ENCODE measurements at regions of chr12 and their contacts with region 1.

Region 1: DNA sequence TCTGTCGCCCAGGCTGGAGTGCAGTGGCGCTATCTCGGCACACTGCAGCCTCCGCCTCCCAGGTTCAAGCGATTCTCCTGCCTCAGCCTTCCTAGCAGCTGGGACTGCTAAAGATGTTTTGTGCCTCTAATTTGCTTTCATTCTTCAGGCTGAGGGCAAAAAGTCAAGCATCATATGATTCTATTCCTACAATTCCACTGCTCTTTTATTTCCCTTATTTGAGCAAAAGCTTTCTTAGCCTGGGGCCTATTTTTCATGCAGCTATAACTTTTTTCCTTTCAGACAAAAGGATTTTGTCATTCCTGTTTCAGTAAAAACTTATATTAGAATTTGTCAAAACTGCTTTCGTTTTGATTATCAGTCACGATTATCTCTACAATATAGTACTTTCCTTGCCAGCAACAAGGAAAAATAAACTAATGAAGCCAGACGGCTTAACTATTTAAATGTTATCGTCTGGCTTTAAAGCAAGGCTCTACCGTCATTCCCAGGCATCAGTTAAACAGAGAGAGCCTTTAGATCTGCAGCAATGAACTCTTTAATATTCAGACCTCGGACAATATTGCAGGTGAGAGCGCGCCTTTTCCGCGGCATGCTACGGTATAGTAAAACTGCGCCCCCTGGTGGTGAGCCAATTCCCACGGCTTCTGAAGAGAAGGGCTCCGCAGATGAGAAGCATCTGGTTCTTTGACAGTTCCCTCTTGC is 1.4 kb upstream of the SLC2A13 start:
- DNase-seq: peak; percentile 62 to 82
- ATAC-seq: peak; percentile 25 to 54; a peak in 3 of 6 replicates
- H3K4me3 ChIP-seq: peak overlapping the region; percentile 31; the same call in 2 of the 3 replicates
- H3K27ac ChIP-seq: no peak overlapping the region
- H3K4me1 ChIP-seq: peaks cover 3% of the 10 kb centered on the region; the same call in 1 of the 3 replicates
- CTCF ChIP-seq: peak; percentile 91
- EP300 ChIP-seq: no peak
- POLR2A ChIP-seq: no peak
- RAD21 ChIP-seq: peak; percentile 85 to 87

Region 2: DNA sequence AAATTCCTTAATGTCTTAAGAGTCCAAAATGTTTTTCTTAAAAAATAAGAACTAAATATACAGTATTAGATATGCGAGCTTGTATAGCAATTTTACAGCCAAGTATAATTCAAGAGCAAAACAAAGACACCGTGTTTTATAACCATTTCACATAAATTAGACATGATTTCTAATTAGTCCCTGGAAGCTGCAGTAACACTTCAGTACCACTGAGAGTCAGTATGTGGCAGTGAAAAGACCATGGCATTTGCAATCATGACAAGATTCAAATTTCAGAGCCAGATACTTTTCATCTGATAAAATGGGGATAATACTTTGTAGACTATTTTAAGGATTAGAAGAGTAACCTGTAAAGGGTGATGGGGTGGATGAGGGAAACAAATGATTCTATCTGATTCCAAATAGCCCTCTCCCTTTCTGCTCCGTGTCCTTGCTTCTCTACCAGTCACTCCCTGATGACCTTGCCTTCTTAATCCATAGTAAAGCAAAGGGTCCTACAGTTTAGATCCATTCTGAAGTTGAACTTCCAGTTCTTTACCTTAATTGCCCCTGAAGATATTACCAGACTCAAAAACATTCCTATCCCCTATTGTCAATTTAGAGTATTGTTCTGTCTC is 342.2 kb before region 1 on chr12:
- CTCF ChIA-PET with region 1: interaction called, 28 read pairs
- POLR2A ChIA-PET with region 1: no interaction called
- DNase-seq: peak; percentile 28 to 55
- ATAC-seq: peak; percentile 47 to 79; a peak in 3 of 6 replicates
- H3K4me3 ChIP-seq: no peak overlapping the region
- H3K27ac ChIP-seq: no peak overlapping the region
- H3K4me1 ChIP-seq: no peaks in the 10 kb centered on the region
- CTCF ChIP-seq: peak; percentile 74
- EP300 ChIP-seq: no peak
- POLR2A ChIP-seq: no peak
- RAD21 ChIP-seq: peak; percentile 87 to 89

Region 3: GRCh38 chr12:39912211-39912978 is 194.9 kb before region 1 on chr12:
- CTCF ChIA-PET with region 1: no interaction called
- POLR2A ChIA-PET with region 1: no interaction called
- DNase-seq: peak in 1 of 2 experiments; percentile 19
- ATAC-seq: no peak
- H3K4me3 ChIP-seq: no peak overlapping the region
- H3K27ac ChIP-seq: no peak overlapping the region
- H3K4me1 ChIP-seq: no peaks in the 10 kb centered on the region
- CTCF ChIP-seq: no peak
- EP300 ChIP-seq: no peak
- POLR2A ChIP-seq: no peak
- RAD21 ChIP-seq: no peak

Region 4: DNA sequence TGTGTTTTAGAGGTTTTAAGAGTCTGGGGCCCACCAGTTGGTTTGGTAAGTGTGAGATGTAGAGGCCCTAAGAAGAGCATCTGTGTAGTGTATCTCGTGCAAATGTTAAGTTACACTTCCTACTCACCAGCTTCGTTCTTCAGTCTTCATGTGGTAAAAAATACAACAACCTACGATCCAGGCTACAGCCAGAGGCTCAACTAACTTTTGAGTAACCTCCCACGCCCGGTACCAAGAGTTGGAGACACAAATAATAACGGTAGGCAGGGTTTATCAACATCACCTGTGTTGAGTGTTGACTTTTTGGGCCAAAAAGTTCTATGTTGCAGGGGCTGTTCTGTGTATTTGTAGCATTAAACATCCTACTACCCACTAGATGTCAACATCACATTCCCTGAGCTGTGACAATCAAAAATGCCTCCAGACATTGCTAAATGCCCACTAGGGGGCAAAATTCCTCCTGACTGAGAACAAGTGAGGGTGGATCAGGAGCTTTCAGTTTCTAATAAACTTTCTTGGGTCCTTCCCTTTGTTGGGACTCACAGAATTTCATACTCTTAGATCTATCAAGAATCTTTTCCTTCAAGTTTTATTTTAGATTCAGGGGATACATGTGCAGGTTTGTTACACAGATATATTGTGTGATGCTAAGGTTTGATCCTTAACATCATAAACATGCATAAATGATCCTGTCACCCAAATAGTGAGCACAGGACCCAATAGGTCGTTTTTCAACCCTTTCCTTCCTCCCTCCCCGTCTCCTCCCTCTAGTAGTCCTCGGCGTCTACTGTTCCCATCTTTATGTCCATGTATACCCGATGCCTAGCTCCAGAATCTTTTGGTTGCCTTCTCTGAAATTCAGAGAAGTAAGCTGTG is 96.1 kb before region 1 on chr12:
- CTCF ChIA-PET with region 1: interaction called, 66 read pairs
- POLR2A ChIA-PET with region 1: no interaction called
- DNase-seq: peak; percentile 55 to 80
- ATAC-seq: peak; percentile 95 to 98
- H3K4me3 ChIP-seq: no peak overlapping the region
- H3K27ac ChIP-seq: peak overlapping the region in 1 of 2 experiments; percentile 42; a peak in 3 of 6 replicates
- H3K4me1 ChIP-seq: peaks cover 18% of the 10 kb centered on the region
- CTCF ChIP-seq: peak; percentile 96
- EP300 ChIP-seq: no peak
- POLR2A ChIP-seq: no peak
- RAD21 ChIP-seq: peak; percentile 82

Region 5: DNA sequence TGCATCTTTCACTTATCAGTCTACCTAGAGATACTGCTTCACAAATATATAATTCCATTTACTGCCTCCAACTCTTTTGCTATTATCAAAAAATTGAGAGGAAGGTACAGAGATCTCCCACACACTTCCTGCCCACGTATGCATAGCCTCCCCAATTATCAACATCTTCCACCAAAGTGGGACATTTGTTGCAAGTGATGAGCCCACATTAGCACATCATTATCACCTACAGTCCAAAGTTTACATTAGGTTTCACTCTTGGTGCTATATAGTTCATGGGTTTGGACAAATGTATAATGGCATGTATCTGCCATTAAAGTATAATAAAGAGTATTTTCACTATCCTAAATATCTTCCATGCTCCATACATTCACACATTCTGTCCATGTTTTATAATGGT is 67.7 kb before region 1 on chr12:
- CTCF ChIA-PET with region 1: no interaction called
- POLR2A ChIA-PET with region 1: no interaction called
- DNase-seq: no peak
- ATAC-seq: no peak
- H3K4me3 ChIP-seq: no peak overlapping the region
- H3K27ac ChIP-seq: no peak overlapping the region
- H3K4me1 ChIP-seq: peaks cover 11% of the 10 kb centered on the region
- CTCF ChIP-seq: no peak
- EP300 ChIP-seq: no peak
- POLR2A ChIP-seq: no peak
- RAD21 ChIP-seq: no peak

Region 6: DNA sequence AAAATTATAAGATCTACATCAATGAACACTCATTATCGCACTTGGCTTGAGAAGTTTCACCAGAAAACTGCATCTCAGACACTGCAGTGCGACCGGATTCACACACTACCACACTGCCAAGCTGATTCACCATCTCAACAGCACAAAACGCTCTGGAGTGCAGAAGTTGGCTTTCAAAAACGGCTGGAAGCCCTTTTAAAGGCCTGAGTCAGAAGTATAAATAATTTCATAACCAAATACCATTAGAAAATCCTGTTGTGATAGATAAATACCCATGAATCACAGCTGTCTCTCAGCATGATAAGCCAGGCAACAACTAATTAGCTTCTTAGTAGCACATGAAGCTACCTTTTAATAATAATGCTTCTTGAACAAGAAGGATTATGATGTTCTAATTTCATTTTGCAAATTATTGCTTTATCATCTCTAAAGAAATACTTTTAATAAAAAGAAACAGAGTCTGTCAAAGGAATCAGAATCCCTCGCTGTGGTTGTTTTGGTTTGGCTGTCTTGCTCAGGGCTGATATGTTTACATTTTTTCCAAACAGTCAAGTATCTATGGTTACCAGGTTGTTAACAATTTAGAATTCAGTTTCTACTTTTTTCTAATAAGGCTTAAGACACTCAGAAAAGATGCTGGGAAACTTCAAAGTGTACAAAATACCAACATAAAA is 52.6 kb before region 1 on chr12:
- CTCF ChIA-PET with region 1: interaction called, 13 read pairs
- POLR2A ChIA-PET with region 1: no interaction called
- DNase-seq: peak; percentile 21 to 58
- ATAC-seq: peak; percentile 79 to 95
- H3K4me3 ChIP-seq: no peak overlapping the region
- H3K27ac ChIP-seq: no peak overlapping the region; a peak in 1 of 6 replicates
- H3K4me1 ChIP-seq: peaks cover 24% of the 10 kb centered on the region; the same call in 2 of the 3 replicates
- CTCF ChIP-seq: no peak
- EP300 ChIP-seq: no peak
- POLR2A ChIP-seq: no peak
- RAD21 ChIP-seq: no peak

Region 7: DNA sequence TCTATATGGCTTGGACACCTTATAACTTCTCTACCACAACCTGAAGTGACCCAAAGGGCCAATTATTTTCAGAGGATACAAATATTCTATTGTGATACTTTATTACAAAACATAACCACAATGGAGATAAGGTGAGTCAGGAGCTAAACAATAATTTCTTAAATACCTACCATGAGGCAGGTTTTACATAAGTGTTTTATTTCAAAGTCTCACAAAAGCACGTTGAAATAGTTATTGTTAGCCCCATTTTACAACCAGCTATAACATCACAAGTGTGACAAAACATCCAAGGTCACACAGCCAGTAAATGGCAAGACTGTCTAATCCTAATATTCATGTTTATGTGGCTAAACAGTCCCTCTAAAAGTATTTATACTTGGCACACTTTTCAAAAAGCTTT is 41.6 kb before region 1 on chr12:
- CTCF ChIA-PET with region 1: interaction called, 10 read pairs
- POLR2A ChIA-PET with region 1: no interaction called
- DNase-seq: no peak
- ATAC-seq: no peak; a peak in 1 of 6 replicates
- H3K4me3 ChIP-seq: no peak overlapping the region
- H3K27ac ChIP-seq: no peak overlapping the region
- H3K4me1 ChIP-seq: no peaks in the 10 kb centered on the region
- CTCF ChIP-seq: no peak
- EP300 ChIP-seq: no peak
- POLR2A ChIP-seq: no peak
- RAD21 ChIP-seq: no peak

Region 8: GRCh38 chr12:40093512-40093911 is 13.7 kb before region 1 on chr12:
- CTCF ChIA-PET with region 1: interaction called, 15 read pairs
- POLR2A ChIA-PET with region 1: no interaction called
- DNase-seq: no peak
- ATAC-seq: no peak
- H3K4me3 ChIP-seq: no peak overlapping the region
- H3K27ac ChIP-seq: no peak overlapping the region
- H3K4me1 ChIP-seq: no peaks in the 10 kb centered on the region
- CTCF ChIP-seq: no peak
- EP300 ChIP-seq: no peak
- POLR2A ChIP-seq: no peak
- RAD21 ChIP-seq: no peak

Region 9: DNA sequence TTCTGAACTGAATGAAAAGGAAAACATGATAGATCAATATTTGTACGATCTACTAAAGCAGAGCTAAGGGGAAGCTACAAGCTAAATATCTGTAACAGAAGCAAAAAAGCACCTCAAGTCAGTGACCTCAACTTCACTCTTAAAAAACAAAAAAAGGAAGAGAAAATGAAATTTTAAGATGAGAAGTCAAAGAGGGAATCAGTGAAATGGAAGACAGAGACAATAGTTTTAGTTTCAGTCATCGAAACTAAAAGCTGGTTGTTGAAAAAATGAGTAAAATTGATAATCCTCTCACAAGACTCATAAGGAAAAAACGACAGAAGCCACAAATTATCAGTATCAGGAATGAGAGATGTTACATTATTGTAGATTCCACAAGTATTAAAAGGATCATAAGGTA is 10.6 kb after region 1 on chr12:
- CTCF ChIA-PET with region 1: interaction called, 33 read pairs
- POLR2A ChIA-PET with region 1: no interaction called
- DNase-seq: no peak
- ATAC-seq: no peak
- H3K4me3 ChIP-seq: no peak overlapping the region
- H3K27ac ChIP-seq: no peak overlapping the region
- H3K4me1 ChIP-seq: no peaks in the 10 kb centered on the region
- CTCF ChIP-seq: no peak
- EP300 ChIP-seq: no peak
- POLR2A ChIP-seq: no peak
- RAD21 ChIP-seq: no peak

Region 10: GRCh38 chr12:40141996-40142395 is 34.7 kb after region 1 on chr12:
- CTCF ChIA-PET with region 1: no interaction called
- POLR2A ChIA-PET with region 1: no interaction called
- DNase-seq: no peak
- ATAC-seq: no peak
- H3K4me3 ChIP-seq: no peak overlapping the region
- H3K27ac ChIP-seq: no peak overlapping the region
- H3K4me1 ChIP-seq: peaks cover 9% of the 10 kb centered on the region; the same call in 1 of the 3 replicates
- CTCF ChIP-seq: no peak
- EP300 ChIP-seq: no peak
- POLR2A ChIP-seq: no peak
- RAD21 ChIP-seq: no peak

Region 11: DNA sequence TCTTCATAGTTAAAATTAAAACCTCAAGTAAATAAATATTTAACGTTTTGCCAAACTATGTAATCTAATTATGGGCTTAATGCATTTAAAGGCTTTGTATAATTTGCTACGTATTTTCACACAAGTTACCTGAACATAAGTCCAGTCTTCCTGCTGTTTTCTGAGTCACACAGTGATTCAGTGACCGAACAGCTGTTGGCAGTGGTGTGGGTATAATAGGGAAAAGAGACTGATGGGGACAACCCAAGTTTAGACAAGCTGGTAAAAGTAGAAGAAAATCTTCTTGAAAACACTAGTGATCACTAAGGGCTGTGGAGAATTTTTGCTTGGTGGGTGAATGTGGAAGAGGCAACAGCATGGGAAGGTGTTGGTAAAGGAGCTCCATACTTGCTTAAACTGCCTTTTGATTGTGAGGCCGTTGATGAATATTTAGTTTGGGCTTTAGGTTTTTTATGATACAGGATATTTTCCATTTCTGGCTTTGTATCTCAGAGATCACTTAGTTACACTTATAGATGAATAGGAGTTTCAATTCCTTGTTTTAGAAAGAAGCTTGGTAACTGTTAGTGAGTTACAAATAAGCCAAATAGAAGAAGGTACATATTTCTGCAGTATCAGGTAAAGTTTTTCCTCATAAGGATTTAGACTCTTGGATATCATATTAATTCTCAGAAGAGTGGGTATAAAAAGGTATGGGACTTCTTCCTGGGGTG is 141.5 kb after region 1 on chr12:
- CTCF ChIA-PET with region 1: no interaction called
- POLR2A ChIA-PET with region 1: no interaction called
- DNase-seq: peak in 1 of 2 experiments; percentile 18
- ATAC-seq: peak in 1 of 2 experiments; percentile 51; a peak in 2 of 6 replicates
- H3K4me3 ChIP-seq: no peak overlapping the region
- H3K27ac ChIP-seq: no peak overlapping the region
- H3K4me1 ChIP-seq: peaks cover 12% of the 10 kb centered on the region
- CTCF ChIP-seq: no peak
- EP300 ChIP-seq: no peak
- POLR2A ChIP-seq: no peak
- RAD21 ChIP-seq: no peak